ENCODE measurements at regions of chr11 and their contacts with region 1.

Region 1: DNA sequence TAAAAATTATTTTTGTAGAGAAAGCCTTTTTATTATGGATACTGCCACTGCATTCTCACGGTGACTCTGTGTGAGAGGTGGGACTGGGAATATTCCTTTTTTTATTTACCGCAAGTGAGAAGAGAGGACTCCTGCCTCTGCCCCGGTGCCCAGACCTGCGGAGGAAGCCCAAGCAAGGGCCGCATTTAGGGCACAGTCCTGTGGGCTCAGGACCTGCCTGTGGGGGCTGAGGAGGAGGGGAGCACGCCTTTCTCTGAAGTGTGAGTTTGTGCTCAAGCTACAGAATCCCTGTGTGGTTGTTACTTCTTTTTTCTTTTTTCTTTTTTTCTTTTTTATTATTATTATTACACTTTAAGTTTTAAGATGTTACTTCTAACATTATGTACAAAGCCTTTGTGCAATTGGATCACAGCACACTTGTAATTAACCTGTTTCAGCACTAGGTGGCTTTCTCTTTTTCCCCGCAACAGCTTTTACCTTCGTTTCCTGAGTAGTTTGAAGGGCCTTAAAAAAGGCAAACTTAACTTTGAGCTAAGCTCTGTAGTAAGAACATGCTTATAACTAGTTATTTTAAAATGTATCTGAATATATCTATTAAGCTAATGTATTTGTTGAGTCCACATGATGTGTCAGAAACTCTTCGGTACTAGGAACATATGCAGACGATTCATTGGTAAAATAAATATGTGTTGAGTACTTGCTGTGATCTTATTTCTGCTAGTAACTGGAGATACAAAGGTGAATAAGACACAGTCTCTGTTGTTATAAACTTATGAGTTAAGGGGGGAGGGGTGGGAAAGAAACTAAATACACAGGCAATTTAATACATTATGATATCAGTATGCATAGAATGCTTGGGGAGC is 18.3 kb downstream of the AMOTL1 start:
- DNase-seq: no peak
- ATAC-seq: no peak

Region 2: DNA sequence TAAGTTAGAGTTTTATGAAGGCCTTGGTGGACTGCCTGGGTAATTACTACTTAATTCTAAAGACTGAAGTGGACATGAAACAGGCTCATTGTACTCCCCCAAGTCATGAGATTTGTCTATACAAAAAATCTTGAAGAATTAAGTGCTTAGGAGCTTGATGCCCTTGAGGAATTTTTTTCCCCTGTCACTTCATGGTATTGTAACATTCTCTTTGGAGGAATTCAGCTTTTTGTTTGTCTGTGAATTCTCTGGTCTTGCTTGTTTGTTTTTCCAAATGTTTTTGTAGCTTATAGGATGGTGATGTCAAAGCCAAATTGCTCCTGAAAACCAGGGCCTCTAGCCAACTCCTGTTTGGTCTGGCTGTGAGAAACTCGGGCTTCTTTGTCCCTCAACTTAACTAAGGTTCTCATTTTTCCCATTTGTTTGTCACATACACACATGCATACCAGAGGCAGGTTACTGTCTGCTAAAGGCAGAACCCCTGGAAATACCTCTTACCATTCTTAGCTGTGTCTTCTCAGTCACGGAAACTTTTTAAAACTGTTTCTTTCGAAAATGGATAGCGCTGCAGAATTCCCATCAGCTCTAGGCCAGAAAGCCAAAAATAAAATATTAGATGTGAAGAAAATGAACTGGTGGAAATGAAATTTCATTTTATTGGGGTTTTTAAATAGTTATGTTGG is 48.6 kb after region 1 on chr11:
- intact Hi-C with region 1: loop called in 1 of 2 experiments (anchors 1 kb)
- DNase-seq: no peak
- ATAC-seq: no peak